ENCODE measurements at regions of chr1 and their contacts with region 1.

Region 1: DNA sequence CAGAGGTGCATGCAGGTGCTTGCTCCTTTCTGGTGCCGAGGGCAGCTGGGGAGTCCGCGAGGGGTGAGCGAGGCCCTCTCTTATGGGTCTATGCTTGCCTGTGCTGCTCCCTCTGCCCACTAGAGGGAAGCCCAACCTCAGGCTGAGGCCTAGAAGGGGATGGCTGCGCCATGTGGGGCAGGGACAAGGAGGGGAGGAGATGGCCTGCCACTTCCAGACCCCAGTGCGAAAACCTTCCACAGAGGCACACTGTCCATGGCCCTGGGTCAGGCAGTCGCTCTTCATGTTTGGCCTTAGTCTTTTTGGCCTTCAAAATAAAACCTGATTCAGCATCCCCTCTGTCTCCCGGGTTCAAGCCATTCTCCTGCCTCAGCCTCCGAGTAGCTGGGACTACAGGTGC is 14.0 kb downstream of the RHBG start:
- DNase-seq: peak; percentile 80
- H3K4me3 Mint-ChIP-seq: no peak overlapping the region
- H3K27ac Mint-ChIP-seq: no peak overlapping the region
- H3K4me1 Mint-ChIP-seq: peaks cover 11% of the 10 kb centered on the region
- H3K27me3 Mint-ChIP-seq: no peaks in the 10 kb centered on the region
- CTCF ChIP-seq: peak; percentile 94

Region 2: DNA sequence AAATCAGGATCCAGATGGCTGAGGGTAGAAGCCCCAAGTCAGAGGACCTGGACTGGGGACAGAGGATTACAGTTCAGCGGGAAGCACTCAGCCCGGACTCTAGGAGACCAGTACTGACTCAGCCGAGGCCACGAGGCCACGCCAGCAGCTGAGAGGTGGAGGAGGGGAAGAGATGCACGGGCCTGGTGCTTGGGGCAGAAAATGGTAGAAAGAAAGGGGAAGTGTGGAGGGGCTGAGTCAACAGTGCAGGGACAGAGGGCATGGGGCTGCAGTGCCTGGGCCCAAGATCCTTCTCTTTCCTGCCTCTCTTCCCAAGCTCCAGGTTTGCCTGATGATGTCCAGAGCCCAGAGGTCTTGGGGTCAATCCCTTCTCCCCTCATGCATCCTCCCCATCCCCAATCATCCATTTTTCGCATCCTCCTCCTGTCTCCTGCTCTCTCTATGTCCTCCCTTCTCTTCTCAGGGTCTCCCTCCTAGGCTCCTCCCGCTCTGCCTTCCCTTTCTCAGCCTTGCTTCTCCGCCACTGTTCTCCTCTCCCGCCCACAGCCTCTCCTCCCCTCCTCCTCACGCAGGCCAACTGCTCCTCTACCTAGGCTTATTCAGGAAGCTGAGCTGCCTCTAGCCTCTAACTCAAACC is 412.4 kb before region 1 on chr1:
- CTCF ChIA-PET with region 1: no interaction called
- POLR2A ChIA-PET with region 1: no interaction called
- intact Hi-C with region 1: no loop called
- DNase-seq: peak; percentile 75
- H3K4me3 Mint-ChIP-seq: no peak overlapping the region
- H3K27ac Mint-ChIP-seq: peak overlapping the region; percentile 46
- H3K4me1 Mint-ChIP-seq: peaks cover 56% of the 10 kb centered on the region
- H3K27me3 Mint-ChIP-seq: no peaks in the 10 kb centered on the region
- CTCF ChIP-seq: no peak

Region 3: DNA sequence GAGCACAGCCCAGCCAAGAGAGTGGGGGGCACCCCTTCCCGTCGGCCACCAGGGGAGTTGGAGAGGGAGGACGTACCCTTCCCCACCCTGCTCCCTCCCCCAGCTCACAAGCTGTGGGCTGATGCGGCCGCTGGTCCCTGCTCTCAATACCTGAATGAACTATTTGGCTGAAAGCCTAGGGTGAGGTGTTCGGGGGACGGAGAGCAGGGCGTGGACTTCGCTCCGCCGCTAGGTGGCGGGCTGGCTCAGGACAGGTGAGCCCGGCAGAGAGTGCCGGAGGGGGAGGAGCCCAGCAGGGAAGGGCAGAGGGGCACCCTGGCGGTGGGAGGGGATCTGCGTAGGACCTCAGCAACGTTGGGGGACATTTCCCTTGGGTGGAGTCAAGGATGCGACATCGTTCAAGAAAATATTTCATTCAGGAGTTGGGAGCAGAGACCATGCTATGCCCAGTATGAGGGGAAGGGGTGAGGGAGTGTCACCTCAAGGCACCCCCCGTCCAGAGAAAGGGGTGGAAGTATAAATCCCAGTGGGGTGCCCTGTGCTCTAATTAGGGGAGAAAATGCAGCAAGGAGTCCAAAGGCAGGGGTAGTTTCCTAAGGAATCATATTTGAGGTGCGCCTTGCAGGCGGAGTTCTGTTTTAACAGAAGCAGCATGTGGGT is 26.0 kb before region 1 on chr1:
- CTCF ChIA-PET with region 1: interaction called, 121 read pairs
- POLR2A ChIA-PET with region 1: no interaction called
- intact Hi-C with region 1: no loop called
- DNase-seq: peak; percentile 85
- H3K4me3 Mint-ChIP-seq: no peak overlapping the region
- H3K27ac Mint-ChIP-seq: no peak overlapping the region
- H3K4me1 Mint-ChIP-seq: peaks cover 7% of the 10 kb centered on the region
- H3K27me3 Mint-ChIP-seq: peaks cover 52% of the 10 kb centered on the region
- CTCF ChIP-seq: peak; percentile 98

Region 4: GRCh38 chr1:156421062-156421938 is 38.3 kb after region 1 on chr1:
- CTCF ChIA-PET with region 1: interaction called, 56 read pairs
- POLR2A ChIA-PET with region 1: interaction called, 3 read pairs
- intact Hi-C with region 1: no loop called
- DNase-seq: peak; percentile 93
- H3K4me3 Mint-ChIP-seq: peak overlapping the region; percentile 71
- H3K27ac Mint-ChIP-seq: no peak overlapping the region
- H3K4me1 Mint-ChIP-seq: peaks cover 5% of the 10 kb centered on the region
- H3K27me3 Mint-ChIP-seq: peaks cover 90% of the 10 kb centered on the region
- CTCF ChIP-seq: no peak

Region 5: DNA sequence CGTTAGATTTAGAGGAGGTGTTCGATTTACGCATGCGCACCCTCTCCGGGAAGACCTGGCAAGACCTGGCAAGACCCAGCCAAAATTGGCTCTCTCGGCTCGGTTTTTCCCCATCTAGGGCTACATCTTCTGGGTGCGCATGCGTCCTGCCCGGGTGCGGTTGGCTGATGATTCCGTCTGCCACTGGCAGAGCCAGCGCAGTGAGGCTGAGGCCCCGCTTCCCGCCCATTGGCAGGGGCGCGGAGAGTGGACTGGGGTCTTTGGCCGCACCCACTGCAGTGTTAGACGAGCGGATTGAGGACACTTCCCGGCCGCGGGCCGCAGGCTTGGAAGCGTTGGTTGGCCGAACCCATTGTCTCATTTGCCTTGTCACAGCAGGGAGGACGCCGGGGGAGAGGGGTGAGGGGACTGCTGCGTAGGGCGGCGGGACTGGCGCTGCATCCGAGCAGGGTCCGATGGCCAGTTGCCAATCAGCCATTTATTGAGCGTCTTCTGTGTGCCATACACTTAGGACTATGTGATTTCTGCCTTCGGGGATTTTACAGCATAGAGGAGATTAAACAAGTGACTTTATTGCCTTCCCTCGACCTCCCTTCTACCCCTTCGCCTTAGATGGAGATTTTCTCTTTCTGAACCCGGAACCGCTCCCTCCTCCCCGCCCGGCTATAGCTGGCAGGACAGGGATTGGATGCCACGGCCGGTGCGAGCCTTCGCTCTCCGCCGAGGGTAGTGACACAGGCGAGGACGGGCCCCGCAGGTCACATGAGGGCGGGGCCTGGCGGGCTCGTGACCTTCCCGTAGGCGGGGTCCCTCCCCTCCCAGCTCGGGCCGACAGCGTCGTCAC is 73.8 kb after region 1 on chr1:
- CTCF ChIA-PET with region 1: interaction called, 30 read pairs
- POLR2A ChIA-PET with region 1: interaction called, 3 read pairs
- intact Hi-C with region 1: no loop called
- DNase-seq: peak; percentile 100
- H3K4me3 Mint-ChIP-seq: peak overlapping the region; percentile 90
- H3K27ac Mint-ChIP-seq: peak overlapping the region; percentile 99
- H3K4me1 Mint-ChIP-seq: peaks cover 42% of the 10 kb centered on the region
- H3K27me3 Mint-ChIP-seq: no peaks in the 10 kb centered on the region
- CTCF ChIP-seq: no peak

Region 6: DNA sequence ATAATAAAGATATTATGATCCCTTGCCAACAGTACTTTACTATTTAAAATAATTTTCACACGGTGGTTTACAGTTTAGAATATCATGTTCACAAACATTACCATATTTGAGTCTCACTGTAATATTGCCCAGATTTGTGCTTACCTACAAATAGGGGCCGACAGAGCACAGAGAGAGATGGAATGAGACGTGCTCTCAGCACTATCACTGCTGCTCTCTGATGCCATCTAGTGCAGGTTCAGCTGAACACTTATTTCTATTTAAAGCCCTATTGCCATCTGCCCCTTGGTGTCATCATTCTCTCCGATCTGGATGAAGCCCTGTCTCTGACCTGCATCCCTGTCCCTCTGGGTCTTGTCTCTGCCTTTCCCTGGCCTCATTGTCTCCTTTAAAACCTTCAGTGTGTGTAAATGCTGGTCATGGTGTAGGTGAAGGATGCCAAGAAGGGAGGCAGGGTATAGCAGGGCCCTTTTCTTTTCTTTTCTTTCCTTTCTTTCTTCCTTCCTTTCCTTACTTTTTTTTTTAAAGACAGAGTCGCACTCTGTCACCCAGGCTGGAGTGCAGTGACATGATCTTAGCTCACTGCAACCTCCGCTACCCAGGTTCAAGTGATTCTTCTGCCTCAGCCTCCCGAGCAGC is 225.1 kb after region 1 on chr1:
- CTCF ChIA-PET with region 1: interaction called, 56 read pairs
- POLR2A ChIA-PET with region 1: no interaction called
- intact Hi-C with region 1: loop called (anchors 1 kb)
- DNase-seq: peak; percentile 87
- H3K4me3 Mint-ChIP-seq: no peak overlapping the region
- H3K27ac Mint-ChIP-seq: no peak overlapping the region
- H3K4me1 Mint-ChIP-seq: no peaks in the 10 kb centered on the region
- H3K27me3 Mint-ChIP-seq: peaks cover 24% of the 10 kb centered on the region
- CTCF ChIP-seq: peak; percentile 89

Measured in MCF 10A (cell line).